Activated naive CD8-positive, alpha-beta T cell treated with anti-CD3 and anti-CD28 coated beads, Interleukin-2, amount 10 ng/mL, durations not matched to agents 7 days and 5 days (primary cell): ENCODE measurements at regions of chr1 and their contacts with region 1.

Region 1: GRCh38 chr1:1777950-1778662 is at the start of gene NADK:
- DNase-seq: peak; percentile 95
- ATAC-seq: peak; percentile 53
- H3K4me3 Mint-ChIP-seq: peak within 1 kb of the TSS; percentile 87
- H3K27ac Mint-ChIP-seq: peak within 1 kb of the TSS; percentile 96
- H3K4me1 Mint-ChIP-seq: peaks cover 52% of the 10 kb centered on the region
- H3K27me3 Mint-ChIP-seq: no peaks in the 10 kb centered on the region
- total RNA-seq, gene NADK: 69.7 to 74.3 TPM

Region 2: DNA sequence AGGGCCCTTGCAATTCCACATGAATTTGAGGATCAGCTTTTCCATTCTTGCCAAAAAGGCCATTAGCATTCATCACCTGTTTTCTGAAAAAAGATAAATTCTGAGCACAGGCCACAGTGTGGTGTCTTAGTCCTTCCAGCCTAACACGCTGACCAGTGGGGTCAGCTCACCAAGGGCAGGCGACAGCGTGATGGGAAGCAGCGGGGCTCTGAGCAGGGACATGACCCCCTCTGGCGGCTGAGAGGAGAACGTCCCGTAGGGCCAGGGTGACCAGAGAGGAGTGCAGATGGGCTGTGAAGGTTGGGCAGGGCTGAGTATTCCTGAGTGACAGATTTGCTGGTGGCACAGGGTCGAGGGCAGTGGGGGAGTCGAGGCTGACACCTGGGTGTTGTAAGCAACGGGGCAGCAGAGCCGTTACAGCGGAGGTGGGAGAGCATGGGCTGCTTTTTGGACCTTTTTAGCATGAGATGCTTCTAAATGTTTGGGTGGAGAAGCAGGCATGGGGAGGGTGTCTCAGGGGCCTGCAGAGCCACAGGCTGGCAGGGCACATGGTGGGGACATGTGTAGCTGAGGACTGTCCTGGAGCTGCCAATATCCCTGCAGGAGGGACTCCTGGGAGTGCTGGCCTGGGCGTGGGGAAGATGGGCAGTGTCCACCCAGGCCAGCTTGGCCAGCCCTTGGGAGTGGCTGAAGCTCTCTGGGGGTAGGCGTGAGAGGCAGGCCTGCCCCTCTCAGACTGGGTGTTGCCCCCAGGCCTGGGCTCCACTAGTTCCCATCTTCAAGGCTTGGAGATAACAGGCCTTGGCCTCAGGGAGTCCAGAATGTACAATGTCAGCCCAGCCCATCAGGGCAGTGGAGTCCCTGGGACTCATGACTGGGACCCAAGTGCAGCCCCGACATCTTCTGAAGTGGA is 128.3 kb after region 1 on chr1:
- POLR2A ChIA-PET with region 1: interaction called, 38 read pairs
- DNase-seq: peak; percentile 73
- ATAC-seq: peak; percentile 27
- H3K4me3 Mint-ChIP-seq: peak overlapping the region; percentile 30
- H3K27ac Mint-ChIP-seq: peak overlapping the region; percentile 78
- H3K4me1 Mint-ChIP-seq: peaks cover 12% of the 10 kb centered on the region
- H3K27me3 Mint-ChIP-seq: peaks cover 1% of the 10 kb centered on the region